Thyroid gland (tissue), 4 donors: ENCODE measurements at regions of chr18 and their contacts with region 1.

Region 1: DNA sequence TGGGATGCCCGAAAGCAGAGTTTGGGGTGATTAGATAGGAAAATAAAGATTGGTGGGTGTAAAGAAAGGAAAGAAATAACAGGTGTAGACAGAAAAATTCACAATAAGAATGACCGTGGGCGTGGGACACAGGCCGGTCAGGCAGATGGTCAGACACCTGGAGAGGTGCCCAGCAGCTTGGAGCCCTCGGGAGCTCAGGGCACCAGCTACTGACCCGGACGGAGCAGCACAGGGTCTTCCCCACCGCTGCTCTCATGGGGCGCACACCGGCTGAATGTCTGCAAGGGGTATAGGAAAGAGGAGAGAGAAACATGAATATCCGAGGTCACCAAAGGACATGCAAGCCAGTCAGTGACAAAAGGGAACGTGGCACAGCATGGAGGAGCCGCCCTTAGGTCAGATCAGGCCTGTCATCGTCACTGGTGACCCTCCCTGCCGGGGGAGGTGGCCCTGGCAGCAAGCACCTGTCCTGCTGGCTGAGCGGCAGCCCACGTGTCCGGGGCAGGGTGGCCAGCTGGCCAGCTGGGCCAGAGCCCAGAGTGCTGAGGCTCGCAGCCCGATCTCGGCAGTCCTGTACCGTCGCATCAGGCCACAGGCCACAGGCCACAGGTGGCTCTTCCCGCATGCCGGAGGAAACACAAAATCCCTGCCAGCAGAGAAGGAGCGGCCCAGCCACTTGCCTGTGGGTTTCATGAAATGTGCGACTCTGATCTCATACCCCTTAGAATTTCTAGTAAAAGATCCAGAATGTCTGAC is 112.0 kb upstream of the NDUFV2 start:
- DNase-seq: peak in 1 of 2 donors; percentile 21
- H3K4me3 ChIP-seq: no peak overlapping the region
- H3K27ac ChIP-seq: no peak overlapping the region
- H3K4me1 ChIP-seq: no peaks in the 10 kb centered on the region
- H3K27me3 ChIP-seq: no peaks in the 10 kb centered on the region
- CTCF ChIP-seq: no peak
- POLR2A ChIP-seq: no peak

Region 2: DNA sequence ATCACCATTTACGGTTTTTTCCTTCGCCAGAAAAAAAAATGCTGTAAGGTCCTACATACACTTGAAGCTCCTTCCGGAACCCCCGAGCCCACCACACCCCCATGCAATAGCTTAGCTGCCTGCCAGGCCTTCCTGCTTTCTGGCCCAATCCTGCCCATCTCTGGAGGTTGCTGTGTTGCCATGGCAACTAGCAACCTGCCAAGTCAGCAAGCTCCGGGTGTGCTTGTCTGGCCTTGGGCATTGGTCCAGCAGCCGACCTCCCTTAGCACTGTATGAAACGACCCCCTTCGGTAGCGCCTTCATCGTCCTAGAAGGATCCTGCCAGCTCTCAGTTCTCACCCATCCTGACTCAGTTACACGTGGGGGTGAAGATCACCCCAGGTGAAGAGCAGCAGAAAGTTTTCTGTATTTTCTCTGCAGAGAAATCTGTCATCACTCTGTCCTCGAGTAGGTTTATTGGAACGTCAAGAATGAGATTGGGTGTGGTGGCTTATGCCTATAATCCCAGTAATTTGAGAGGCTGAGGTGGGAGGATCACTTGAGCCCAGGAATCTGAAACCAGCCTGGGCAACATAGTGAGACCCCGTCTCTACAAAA is 332.5 kb before region 1 on chr18:
- intact Hi-C with region 1: loop called (anchors 2 kb)
- DNase-seq: peak in 1 of 2 donors; percentile 40
- H3K4me3 ChIP-seq: no peak overlapping the region
- H3K27ac ChIP-seq: no peak overlapping the region
- H3K4me1 ChIP-seq: peaks cover 5 to 11% of the 10 kb centered on the region in 2 donors
- H3K27me3 ChIP-seq: no peaks in the 10 kb centered on the region
- CTCF ChIP-seq: no peak
- POLR2A ChIP-seq: no peak

Region 3: DNA sequence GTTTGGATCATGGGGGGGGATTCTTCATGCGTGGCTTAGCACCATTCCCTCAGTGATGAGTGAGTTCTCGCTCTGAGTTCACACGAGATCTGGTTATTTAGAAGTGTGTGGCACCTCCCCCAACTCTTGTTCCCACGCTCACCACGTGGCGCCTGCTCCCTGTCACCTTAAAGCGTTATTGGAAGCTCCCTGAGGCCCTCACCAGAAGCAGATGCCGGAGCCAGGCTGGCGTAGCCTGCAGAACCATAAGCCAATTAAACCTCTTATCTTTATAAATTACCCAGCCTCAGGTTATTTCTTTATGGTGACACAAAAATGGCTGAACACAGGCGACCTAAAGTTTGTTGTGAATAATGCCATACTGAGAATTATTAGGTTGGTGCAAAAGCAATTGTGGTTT is 295.6 kb before region 1 on chr18:
- intact Hi-C with region 1: loop called (anchors 5 kb)
- DNase-seq: no peak
- H3K4me3 ChIP-seq: no peak overlapping the region
- H3K27ac ChIP-seq: no peak overlapping the region
- H3K4me1 ChIP-seq: no peaks in the 10 kb centered on the region
- H3K27me3 ChIP-seq: no peaks in the 10 kb centered on the region
- CTCF ChIP-seq: no peak
- POLR2A ChIP-seq: no peak